Tibial artery (tissue), 4 donors: ENCODE measurements at regions of chr19 and their contacts with region 1.

Region 1: GRCh38 chr19:35879770-35880317 is 11.5 kb downstream of the APLP1 start:
- DNase-seq: peak; percentile 85 to 87
- H3K4me3 ChIP-seq: no peak overlapping the region
- H3K27ac ChIP-seq: no peak overlapping the region
- H3K4me1 ChIP-seq: no peaks in the 10 kb centered on the region
- H3K27me3 ChIP-seq: peaks cover 0 to 13% of the 10 kb centered on the region in 2 donors
- CTCF ChIP-seq: no peak

Region 2: DNA sequence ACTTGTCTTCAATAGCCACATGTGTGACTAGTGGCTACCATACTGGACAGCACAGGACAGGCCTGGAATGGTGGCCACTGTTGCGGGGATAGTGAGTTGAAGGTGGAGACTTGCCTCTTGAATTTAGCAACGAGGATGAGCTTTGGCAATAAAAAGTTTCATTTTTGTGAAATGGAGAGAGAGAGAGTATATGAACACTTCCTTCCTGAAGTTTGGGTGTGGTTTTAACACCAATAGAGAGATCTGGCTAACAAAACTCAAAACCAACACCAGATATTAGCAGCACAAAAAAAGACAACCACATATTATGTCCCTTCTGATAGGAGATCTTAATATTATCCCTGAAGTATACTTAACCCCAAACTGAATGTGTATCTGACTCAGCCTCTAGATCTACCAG is 50.0 kb after region 1 on chr19:
- intact Hi-C with region 1: loop called (anchors 5 kb)
- DNase-seq: no peak
- H3K4me3 ChIP-seq: no peak overlapping the region
- H3K27ac ChIP-seq: no peak overlapping the region
- H3K4me1 ChIP-seq: peaks cover 0 to 11% (median 5%) of the 10 kb centered on the region in 4 donors
- H3K27me3 ChIP-seq: peaks cover 0 to 11% of the 10 kb centered on the region in 2 donors
- CTCF ChIP-seq: no peak

Region 3: GRCh38 chr19:36128392-36128736 is 248.5 kb after region 1 on chr19:
- intact Hi-C with region 1: loop called (anchors 10 kb)
- DNase-seq: no peak
- H3K4me3 ChIP-seq: peak overlapping the region; percentile 46 to 51
- H3K27ac ChIP-seq: peak overlapping the region; percentile 74 to 91
- H3K4me1 ChIP-seq: peaks cover 0 to 20% (median 10%) of the 10 kb centered on the region in 4 donors
- H3K27me3 ChIP-seq: no peaks in the 10 kb centered on the region
- CTCF ChIP-seq: no peak